GM10248 (cell line): ENCODE measurements at regions of chr12 and their contacts with region 1.

Region 1: GRCh38 chr12:26614020-26614616 is 218.9 kb downstream of the ITPR2 start:
- DNase-seq: peak; percentile 14
- CTCF ChIP-seq: peak; percentile 58

Region 2: GRCh38 chr12:26599096-26599695 is 14.9 kb before region 1 on chr12:
- CTCF ChIA-PET with region 1: interaction called, 27 read pairs
- POLR2A ChIA-PET with region 1: no interaction called
- DNase-seq: no peak
- CTCF ChIP-seq: no peak